Sigmoid colon (tissue), 7 donors: ENCODE measurements at regions of chr2 and their contacts with region 1.

Region 1: DNA sequence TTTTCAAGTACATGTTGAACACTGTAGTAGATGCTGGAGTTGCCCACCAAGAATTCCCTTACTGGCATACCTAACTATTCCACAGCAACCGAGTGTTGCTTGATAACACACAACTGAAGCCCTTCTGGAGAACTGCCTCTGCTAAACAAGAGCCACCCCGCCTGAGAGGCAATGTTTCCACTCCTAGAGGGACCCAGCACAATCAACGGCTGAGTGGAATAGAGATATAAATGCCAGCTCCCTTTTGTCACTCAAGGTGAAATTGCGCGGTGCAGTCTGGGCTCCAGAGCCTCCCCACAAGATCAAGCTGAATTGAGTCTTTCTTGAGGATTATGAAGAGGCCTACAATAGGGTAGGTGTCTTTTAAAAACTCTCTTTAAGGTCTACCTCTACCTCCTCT is 49.1 kb upstream of the SCN9A start:
- DNase-seq: no peak
- H3K4me3 ChIP-seq: no peak overlapping the region
- H3K27ac ChIP-seq: no peak overlapping the region
- H3K4me1 ChIP-seq: peaks cover 0 to 6% (median 0%) of the 10 kb centered on the region in 4 donors
- H3K27me3 ChIP-seq: no peaks in the 10 kb centered on the region
- CTCF ChIP-seq: no peak
- EP300 ChIP-seq: no peak
- POLR2A ChIP-seq: no peak

Region 2: GRCh38 chr2:166127217-166128155 is 297.4 kb before region 1 on chr2 and contains the start of gene SCN1A:
- intact Hi-C with region 1: no loop called
- DNase-seq: no peak
- H3K4me3 ChIP-seq: no peak within 1 kb of the TSS
- H3K27ac ChIP-seq: no peak within 1 kb of the TSS
- H3K4me1 ChIP-seq: peaks cover 0 to 18% (median 9%) of the 10 kb centered on the region in 4 donors
- H3K27me3 ChIP-seq: no peaks in the 10 kb centered on the region
- CTCF ChIP-seq: peak in 2 of 4 experiments; percentile 31 to 53
- EP300 ChIP-seq: no peak
- POLR2A ChIP-seq: no peak
- total RNA-seq, gene SCN1A: under 0.01 to 0.36 (median 0.23) TPM

Region 3: DNA sequence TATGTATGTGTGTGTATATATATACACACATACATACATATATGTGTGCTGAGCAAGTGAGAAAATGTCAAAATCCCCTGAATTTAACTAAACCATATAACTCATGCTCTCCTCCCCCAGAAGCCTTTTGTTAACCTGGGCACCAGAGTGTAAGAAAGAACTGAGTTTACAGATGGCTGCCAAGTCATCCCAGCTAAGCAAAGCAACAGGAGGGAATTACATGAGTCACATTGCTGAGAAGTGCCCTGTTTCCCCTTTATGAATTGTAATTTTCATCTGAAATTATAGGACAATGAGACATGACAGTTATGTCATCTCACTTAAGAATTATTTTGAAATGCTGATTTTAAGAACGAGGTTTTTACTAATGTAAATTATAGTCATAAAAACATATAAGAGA is 39.3 kb after region 1 on chr2:
- intact Hi-C with region 1: loop called (anchors 5 kb)
- DNase-seq: no peak
- H3K4me3 ChIP-seq: no peak overlapping the region
- H3K27ac ChIP-seq: peak overlapping the region in 2 of 4 donors; percentile 18 to 47
- H3K4me1 ChIP-seq: peaks cover 0 to 49% (median 22%) of the 10 kb centered on the region in 4 donors
- H3K27me3 ChIP-seq: no peaks in the 10 kb centered on the region
- CTCF ChIP-seq: no peak
- EP300 ChIP-seq: no peak
- POLR2A ChIP-seq: no peak